ENCODE measurements at regions of chr15 and their contacts with region 1.

Region 1: DNA sequence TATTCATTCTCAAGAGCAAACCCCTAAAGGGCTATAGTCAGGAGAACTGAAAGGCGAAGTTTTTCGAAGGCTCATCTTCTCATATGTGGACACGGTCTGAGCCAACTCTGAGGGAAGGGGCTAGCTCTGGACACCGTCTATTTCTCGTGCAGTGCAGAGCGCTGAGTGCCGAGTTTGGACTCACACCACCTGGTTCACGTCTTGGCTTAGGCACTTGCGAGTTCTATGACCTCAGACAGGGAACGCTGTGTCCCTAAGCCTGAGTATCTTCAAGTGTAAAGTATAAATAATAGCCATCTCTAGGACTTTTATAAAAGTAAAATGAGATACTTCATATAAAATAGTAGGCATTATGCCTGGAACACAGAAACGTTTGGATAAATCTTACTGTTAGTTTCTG is 223.7 kb downstream of the FMN1 start:
- DNase-seq: no peak
- H3K4me3 ChIP-seq: no peak overlapping the region
- H3K27ac ChIP-seq: no peak overlapping the region
- H3K4me1 ChIP-seq: peaks cover 3 to 4% of the 10 kb centered on the region in 2 experiments; a peak in 2 of 4 replicates
- H3K27me3 ChIP-seq: no peaks in the 10 kb centered on the region
- CTCF ChIP-seq: no peak
- EP300 ChIP-seq: no peak
- RAD21 ChIP-seq: no peak

Region 2: DNA sequence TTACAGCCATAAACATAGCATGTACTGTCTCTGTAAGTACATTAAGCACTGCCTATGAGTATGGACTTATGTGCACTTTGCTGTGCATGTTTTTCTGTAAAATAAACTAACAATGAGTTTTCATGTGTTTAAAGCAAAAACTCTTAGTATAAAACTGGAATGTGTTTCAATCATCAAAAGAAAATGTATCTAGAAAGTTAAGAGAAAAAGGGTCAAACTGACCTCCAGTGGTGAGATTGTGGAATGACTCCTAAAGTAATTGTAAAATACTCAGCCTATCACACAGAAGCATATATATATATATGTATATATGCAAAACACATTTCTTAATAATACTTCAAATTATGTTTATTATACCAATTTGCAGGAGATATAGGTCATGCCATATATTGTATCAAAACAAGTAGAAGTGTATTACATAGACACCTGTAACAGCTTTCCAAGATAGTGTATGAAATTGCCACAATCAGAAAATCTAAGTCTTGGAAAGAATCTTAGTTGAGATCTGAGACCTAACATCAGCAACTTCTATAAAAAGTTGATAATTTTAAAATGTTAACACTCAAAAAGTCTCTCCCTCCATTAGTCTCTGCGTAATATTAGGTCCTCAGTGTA is 24.1 kb after region 1 on chr15:
- CTCF ChIA-PET with region 1: interaction called, 11 read pairs
- POLR2A ChIA-PET with region 1: no interaction called
- DNase-seq: peak; percentile 38
- H3K4me3 ChIP-seq: no peak overlapping the region
- H3K27ac ChIP-seq: peak overlapping the region in 1 of 2 experiments; percentile 43; a peak in 1 of 4 replicates
- H3K4me1 ChIP-seq: peaks cover 0 to 10% of the 10 kb centered on the region in 2 experiments; a peak in 2 of 4 replicates
- H3K27me3 ChIP-seq: no peaks in the 10 kb centered on the region
- CTCF ChIP-seq: peak; percentile 73
- EP300 ChIP-seq: no peak
- RAD21 ChIP-seq: peak; percentile 87

Region 3: GRCh38 chr15:33055962-33056361 is 85.1 kb after region 1 on chr15:
- CTCF ChIA-PET with region 1: no interaction called
- POLR2A ChIA-PET with region 1: no interaction called
- DNase-seq: peak; percentile 47
- H3K4me3 ChIP-seq: no peak overlapping the region
- H3K27ac ChIP-seq: peak overlapping the region; percentile 1 to 79; a peak in 3 of 4 replicates
- H3K4me1 ChIP-seq: peaks cover 0 to 14% of the 10 kb centered on the region in 2 experiments; a peak in 3 of 4 replicates
- H3K27me3 ChIP-seq: no peaks in the 10 kb centered on the region
- CTCF ChIP-seq: no peak
- EP300 ChIP-seq: peak in 1 of 2 experiments; percentile 87; a peak in 2 of 4 replicates
- RAD21 ChIP-seq: peak; percentile 10; the same call in 1 of the 2 replicates

Measured in SK-N-SH (cell line).